Aorta (tissue), 5 donors: ENCODE measurements at regions of chr9 and their contacts with region 1.

Region 1: DNA sequence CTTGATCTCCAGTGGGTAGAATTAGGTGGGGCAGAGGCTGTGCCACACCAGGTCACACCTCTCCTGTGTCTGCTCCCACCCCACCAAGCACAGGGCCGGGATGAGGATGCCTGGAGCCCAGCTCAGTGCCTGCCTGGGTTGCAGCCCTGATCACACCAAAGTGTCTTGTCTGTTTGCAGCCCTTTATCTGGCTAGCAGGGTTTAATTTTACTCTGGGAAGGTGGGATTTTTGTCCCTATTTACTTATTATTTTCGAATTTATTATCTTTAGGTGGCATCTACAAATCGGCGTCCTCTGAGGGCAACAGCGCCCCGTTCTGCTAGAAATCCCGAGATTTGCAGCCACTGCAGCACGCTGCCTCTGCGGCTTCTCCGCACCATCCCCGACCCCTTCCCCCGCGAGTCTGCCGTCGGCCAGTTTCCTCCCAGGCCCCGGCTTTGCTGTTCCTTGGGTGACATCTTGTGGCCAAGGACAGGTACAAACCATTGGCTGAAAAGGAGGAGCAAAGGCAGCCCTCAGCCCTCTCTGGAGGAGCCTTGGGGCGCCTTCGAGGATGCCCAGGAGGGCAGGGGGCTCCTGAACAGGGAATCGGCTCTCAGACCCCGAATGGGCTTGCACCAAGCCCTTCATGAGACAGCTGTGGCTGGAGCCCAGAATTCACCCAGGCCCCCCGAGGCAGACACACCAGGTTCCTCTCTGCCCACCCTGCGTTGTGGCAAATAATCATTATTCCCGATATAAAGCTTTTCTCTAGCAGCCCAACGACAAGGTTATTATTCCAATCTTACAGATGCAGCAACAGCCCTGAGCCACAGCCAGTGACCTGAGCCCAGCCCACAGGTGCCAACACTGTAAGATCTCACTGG is 113.0 kb downstream of the GAPVD1 start:
- DNase-seq: peak; percentile 78 to 83
- ATAC-seq: peak; percentile 88
- H3K4me3 ChIP-seq: no peak overlapping the region
- H3K27ac ChIP-seq: no peak overlapping the region
- H3K4me1 ChIP-seq: no peaks in the 10 kb centered on the region
- H3K27me3 ChIP-seq: no peaks in the 10 kb centered on the region

Region 2: DNA sequence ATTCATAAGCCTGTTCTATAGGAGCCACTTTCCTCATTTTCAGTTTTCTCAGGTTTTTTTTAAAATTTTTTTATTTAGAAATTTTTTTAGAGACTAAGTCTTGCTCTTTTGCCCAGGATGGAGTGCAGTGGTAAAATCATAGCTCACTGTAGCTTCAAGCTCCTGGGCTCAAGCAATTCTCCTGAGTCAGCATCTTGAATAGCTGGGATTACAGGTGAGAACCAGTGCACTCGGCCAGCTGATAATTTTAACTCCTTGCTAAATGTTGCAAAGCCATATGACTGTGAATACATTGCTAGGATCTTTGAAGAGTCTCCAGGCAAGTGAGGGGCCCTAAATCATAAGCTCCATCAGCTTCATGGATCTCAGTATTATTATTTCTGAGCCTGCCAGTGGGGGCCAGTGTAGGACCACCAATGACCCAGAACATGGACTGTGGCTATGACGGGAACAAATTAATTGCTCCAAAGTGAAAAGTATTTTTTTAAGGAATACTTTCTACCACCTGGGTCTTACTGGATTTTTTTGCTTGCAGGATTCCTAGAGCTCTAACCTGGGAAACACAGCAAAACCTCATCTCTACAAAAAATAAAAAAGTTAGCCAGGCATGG is 118.8 kb before region 1 on chr9:
- intact Hi-C with region 1: loop called in 1 of 2 experiments (anchors 10 kb)
- DNase-seq: no peak
- ATAC-seq: no peak
- H3K4me3 ChIP-seq: no peak overlapping the region
- H3K27ac ChIP-seq: no peak overlapping the region
- H3K4me1 ChIP-seq: no peaks in the 10 kb centered on the region
- H3K27me3 ChIP-seq: no peaks in the 10 kb centered on the region